CD8-positive, alpha-beta T cell (primary cell): ENCODE measurements at regions of chr1 and their contacts with region 1.

Region 1: GRCh38 chr1:39672551-39672947 is 642 bp upstream of the NT5C1A start:
- DNase-seq: peak in 6 of 9 experiments; percentile 7 to 70 (median 50)
- ATAC-seq: peak; percentile 45
- H3K4me3 ChIP-seq: peak overlapping the region in 1 of 2 experiments; percentile 48
- H3K4me3 Mint-ChIP-seq: peak overlapping the region; percentile 74
- H3K27ac ChIP-seq: no peak overlapping the region
- H3K27ac Mint-ChIP-seq: no peak overlapping the region
- H3K4me1 ChIP-seq: peaks cover 17% of the 10 kb centered on the region
- H3K4me1 Mint-ChIP-seq: peaks cover 9% of the 10 kb centered on the region
- H3K27me3 ChIP-seq: peaks cover 10 to 15% of the 10 kb centered on the region in 2 experiments
- H3K27me3 Mint-ChIP-seq: peaks cover 29% of the 10 kb centered on the region
- CTCF ChIP-seq: peak; percentile 38

Region 2: DNA sequence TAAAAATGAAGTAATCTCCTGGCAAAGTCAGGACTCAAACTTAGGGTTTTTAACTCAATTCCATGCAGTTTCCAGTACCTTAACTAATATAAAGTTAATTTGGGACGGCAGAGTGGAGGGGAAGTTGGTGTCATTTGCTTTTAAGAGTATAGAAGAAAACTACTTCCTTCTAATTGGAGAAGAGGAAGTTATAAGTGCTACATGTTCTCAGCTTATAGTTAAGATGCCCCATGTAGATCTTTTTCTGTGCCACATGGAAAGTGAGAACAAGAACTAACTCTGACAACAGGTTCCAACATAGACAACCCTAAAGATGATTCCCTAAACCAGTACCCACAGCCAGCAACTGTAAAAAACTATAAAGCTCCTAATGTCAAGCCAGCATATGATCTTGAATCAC is 824.5 kb before region 1 on chr1:
- CTCF ChIA-PET with region 1: no interaction called
- POLR2A ChIA-PET with region 1: no interaction called
- intact Hi-C with region 1: no loop called
- DNase-seq: no peak
- ATAC-seq: no peak
- H3K4me3 ChIP-seq: no peak overlapping the region
- H3K4me3 Mint-ChIP-seq: no peak overlapping the region
- H3K27ac ChIP-seq: no peak overlapping the region
- H3K27ac Mint-ChIP-seq: peak overlapping the region; percentile 43
- H3K4me1 ChIP-seq: no peaks in the 10 kb centered on the region
- H3K4me1 Mint-ChIP-seq: peaks cover 21% of the 10 kb centered on the region
- H3K27me3 ChIP-seq: no peaks in the 10 kb centered on the region
- H3K27me3 Mint-ChIP-seq: no peaks in the 10 kb centered on the region
- CTCF ChIP-seq: no peak

Region 3: GRCh38 chr1:39683591-39684312 is 11.2 kb after region 1 on chr1:
- CTCF ChIA-PET with region 1: interaction called, 16 read pairs
- POLR2A ChIA-PET with region 1: interaction called, 5 read pairs
- intact Hi-C with region 1: no loop called
- DNase-seq: peak; percentile 22 to 77 (median 56)
- ATAC-seq: peak; percentile 80
- H3K4me3 ChIP-seq: peak overlapping the region; percentile 4 to 29
- H3K4me3 Mint-ChIP-seq: peak overlapping the region; percentile 60
- H3K27ac ChIP-seq: no peak overlapping the region
- H3K27ac Mint-ChIP-seq: peak overlapping the region; percentile 61
- H3K4me1 ChIP-seq: peaks cover 28% of the 10 kb centered on the region
- H3K4me1 Mint-ChIP-seq: peaks cover 34% of the 10 kb centered on the region
- H3K27me3 ChIP-seq: peaks cover 0 to 6% of the 10 kb centered on the region in 2 experiments
- H3K27me3 Mint-ChIP-seq: peaks cover 24% of the 10 kb centered on the region
- CTCF ChIP-seq: no peak

Region 4: DNA sequence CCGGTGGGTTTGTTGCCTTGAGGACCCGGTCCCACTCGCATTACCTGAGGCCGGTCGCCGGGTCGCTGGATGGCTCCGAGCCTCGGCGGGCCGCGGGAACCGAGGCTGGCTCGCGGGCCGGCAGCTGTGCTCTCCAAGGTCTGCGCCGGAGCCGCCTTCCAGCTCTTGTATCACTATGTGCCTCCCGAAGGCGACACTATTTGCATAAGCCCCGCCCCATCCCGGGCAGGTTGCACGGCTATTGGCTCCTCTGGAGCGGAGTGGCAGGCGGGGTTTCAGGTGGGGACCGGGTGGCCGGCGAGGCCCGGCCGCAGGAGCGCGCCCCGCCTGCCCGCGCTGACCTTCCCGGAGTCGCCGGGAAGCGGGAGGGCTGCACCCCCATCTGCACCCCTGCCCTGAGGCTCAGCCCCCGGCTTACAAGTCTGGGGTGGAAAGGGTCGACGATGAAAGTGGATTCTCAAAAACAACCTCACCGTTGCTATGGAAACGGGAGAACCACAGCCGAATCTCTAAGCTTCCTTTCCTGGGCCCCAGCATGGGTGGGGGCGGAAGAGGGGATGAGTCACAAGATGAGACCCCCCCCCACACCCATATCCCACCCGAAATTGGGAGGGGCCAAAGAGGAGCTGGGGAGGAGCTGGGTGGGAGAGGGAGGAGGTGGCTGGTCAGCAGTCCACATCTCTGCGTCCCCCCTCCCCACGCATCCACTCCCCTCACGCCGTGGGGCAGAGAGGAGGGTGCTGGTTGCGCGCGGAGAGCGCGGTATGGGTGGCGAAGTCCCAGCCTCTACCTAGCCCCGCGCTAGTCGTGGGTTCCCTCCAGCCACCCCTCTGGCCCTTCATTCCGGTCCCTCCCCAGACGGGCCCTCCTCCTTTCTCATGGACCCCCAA is 19.0 kb after region 1 on chr1 and contains the start of gene HPCAL4:
- CTCF ChIA-PET with region 1: interaction called, 7 read pairs
- POLR2A ChIA-PET with region 1: interaction called, 23 read pairs
- intact Hi-C with region 1: no loop called
- DNase-seq: peak; percentile 77 to 94 (median 89)
- ATAC-seq: peak; percentile 85
- H3K4me3 ChIP-seq: peak within 1 kb of the TSS; percentile 53 to 82
- H3K4me3 Mint-ChIP-seq: peak within 1 kb of the TSS; percentile 86
- H3K27ac ChIP-seq: peak within 1 kb of the TSS; percentile 40 to 86
- H3K27ac Mint-ChIP-seq: peak within 1 kb of the TSS; percentile 82
- H3K4me1 ChIP-seq: peaks cover 28% of the 10 kb centered on the region
- H3K4me1 Mint-ChIP-seq: peaks cover 34% of the 10 kb centered on the region
- H3K27me3 ChIP-seq: peaks cover 0 to 19% of the 10 kb centered on the region in 2 experiments
- H3K27me3 Mint-ChIP-seq: peaks cover 15% of the 10 kb centered on the region
- CTCF ChIP-seq: no peak
- total RNA-seq, gene HPCAL4: 12.1 to 12.8 TPM

Region 5: DNA sequence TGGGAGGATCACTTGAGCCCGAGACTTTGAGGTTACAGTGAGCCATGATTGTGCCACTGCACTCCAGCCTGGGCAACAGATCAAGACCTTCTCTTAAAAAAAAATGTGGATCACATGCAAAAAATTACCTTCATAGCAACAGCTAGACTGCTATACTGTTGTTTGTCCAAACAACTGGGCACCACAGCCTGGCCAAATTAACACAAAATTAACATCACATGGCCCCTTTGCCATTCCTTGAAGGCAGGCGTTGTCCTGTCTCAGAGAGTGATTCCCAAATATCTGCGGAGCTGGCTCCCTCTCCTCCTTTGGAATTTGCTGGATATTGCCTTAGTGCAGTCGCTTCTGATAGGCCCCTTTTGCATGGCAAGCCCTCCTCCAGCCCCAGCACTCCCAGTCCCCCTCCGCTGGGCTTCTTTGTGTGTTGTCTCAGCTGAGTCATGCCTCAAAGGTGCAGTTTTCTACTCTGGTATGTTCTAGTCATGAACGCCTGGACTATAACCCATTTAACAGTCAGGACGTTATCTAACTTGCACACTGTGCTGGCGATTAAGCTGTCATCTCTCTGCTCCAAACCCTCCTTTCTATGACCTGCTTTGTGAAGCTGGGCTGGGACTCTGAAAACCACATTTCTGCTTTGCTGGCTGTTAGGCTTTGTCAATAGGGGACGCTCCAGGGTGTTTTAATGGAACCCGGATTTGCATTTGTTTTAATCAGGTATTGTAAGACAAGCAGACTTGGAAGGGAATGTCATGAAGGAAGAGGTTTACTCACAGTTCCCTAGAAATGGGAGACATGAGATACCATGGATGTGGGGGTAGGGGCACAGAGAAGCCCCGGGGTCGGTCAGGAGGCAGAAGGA is 38.8 kb after region 1 on chr1:
- CTCF ChIA-PET with region 1: interaction called, 15 read pairs
- POLR2A ChIA-PET with region 1: interaction called, 4 read pairs
- intact Hi-C with region 1: no loop called
- DNase-seq: no peak
- ATAC-seq: no peak
- H3K4me3 ChIP-seq: no peak overlapping the region
- H3K4me3 Mint-ChIP-seq: no peak overlapping the region
- H3K27ac ChIP-seq: no peak overlapping the region
- H3K27ac Mint-ChIP-seq: no peak overlapping the region
- H3K4me1 ChIP-seq: no peaks in the 10 kb centered on the region
- H3K4me1 Mint-ChIP-seq: no peaks in the 10 kb centered on the region
- H3K27me3 ChIP-seq: no peaks in the 10 kb centered on the region
- H3K27me3 Mint-ChIP-seq: peaks cover 22% of the 10 kb centered on the region
- CTCF ChIP-seq: no peak

Region 6: GRCh38 chr1:39720094-39720999 is 47.8 kb after region 1 on chr1:
- CTCF ChIA-PET with region 1: interaction called, 17 read pairs
- POLR2A ChIA-PET with region 1: interaction called, 3 read pairs
- intact Hi-C with region 1: loop called (anchors 1 kb)
- DNase-seq: peak in 3 of 9 experiments; percentile 12 to 80 (median 72)
- ATAC-seq: peak; percentile 85
- H3K4me3 ChIP-seq: no peak overlapping the region
- H3K4me3 Mint-ChIP-seq: no peak overlapping the region
- H3K27ac ChIP-seq: no peak overlapping the region
- H3K27ac Mint-ChIP-seq: no peak overlapping the region
- H3K4me1 ChIP-seq: no peaks in the 10 kb centered on the region
- H3K4me1 Mint-ChIP-seq: no peaks in the 10 kb centered on the region
- H3K27me3 ChIP-seq: no peaks in the 10 kb centered on the region
- H3K27me3 Mint-ChIP-seq: peaks cover 38% of the 10 kb centered on the region
- CTCF ChIP-seq: peak; percentile 91

Region 7: GRCh38 chr1:40122855-40123254 is 450.3 kb after region 1 on chr1:
- CTCF ChIA-PET with region 1: no interaction called
- POLR2A ChIA-PET with region 1: no interaction called
- intact Hi-C with region 1: no loop called
- DNase-seq: no peak
- ATAC-seq: no peak
- H3K4me3 ChIP-seq: no peak overlapping the region
- H3K4me3 Mint-ChIP-seq: no peak overlapping the region
- H3K27ac ChIP-seq: no peak overlapping the region
- H3K27ac Mint-ChIP-seq: no peak overlapping the region
- H3K4me1 ChIP-seq: no peaks in the 10 kb centered on the region
- H3K4me1 Mint-ChIP-seq: no peaks in the 10 kb centered on the region
- H3K27me3 ChIP-seq: no peaks in the 10 kb centered on the region
- H3K27me3 Mint-ChIP-seq: peaks cover 10% of the 10 kb centered on the region
- CTCF ChIP-seq: no peak